Activated naive CD4-positive, alpha-beta T cell treated with anti-CD3 and anti-CD28 coated beads for 36 hours (primary cell): ENCODE measurements at regions of chr7 and their contacts with region 1.

Region 1: DNA sequence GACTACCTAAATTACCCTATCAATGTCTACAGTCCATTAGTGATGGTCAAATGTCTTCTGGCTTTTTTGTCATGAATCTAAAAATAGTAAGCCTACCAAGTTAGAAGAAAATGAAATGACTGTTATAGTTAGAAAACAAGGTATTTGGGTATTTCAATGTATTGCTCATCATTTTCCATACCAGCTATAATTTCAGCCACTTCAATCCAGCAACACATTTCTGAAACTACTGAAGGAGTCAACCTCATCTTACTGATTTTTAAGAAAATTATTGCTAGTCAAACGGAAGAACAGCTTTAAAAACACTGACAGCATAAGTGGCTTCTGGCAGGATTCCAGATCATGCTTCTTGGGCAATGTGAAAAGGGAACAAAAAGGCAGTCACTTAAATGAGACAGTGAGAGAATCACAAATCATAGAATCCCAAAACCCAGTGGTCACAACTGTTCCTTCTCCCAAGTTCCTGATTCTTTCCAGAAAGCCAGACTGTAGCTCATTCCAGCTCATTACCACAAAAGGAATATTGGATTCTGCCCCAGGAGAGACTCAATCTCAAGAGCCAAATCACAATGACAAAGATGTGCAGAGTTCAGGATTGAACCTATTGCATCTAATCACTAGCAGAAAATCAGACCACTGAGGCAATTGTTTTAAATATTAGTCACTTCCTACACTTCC is 61.2 kb upstream of the LRRN3 start:
- DNase-seq: peak; percentile 76
- H3K4me3 Mint-ChIP-seq: peak overlapping the region; percentile 34
- H3K27ac Mint-ChIP-seq: peak overlapping the region; percentile 89
- H3K4me1 Mint-ChIP-seq: peaks cover 54% of the 10 kb centered on the region
- H3K27me3 Mint-ChIP-seq: no peaks in the 10 kb centered on the region

Region 2: GRCh38 chr7:110317541-110318275 is 712.0 kb before region 1 on chr7:
- CTCF ChIA-PET with region 1: no interaction called
- intact Hi-C with region 1: no loop called
- DNase-seq: peak; percentile 4
- H3K4me3 Mint-ChIP-seq: no peak overlapping the region
- H3K27ac Mint-ChIP-seq: no peak overlapping the region
- H3K4me1 Mint-ChIP-seq: no peaks in the 10 kb centered on the region
- H3K27me3 Mint-ChIP-seq: peaks cover 2% of the 10 kb centered on the region

Region 3: DNA sequence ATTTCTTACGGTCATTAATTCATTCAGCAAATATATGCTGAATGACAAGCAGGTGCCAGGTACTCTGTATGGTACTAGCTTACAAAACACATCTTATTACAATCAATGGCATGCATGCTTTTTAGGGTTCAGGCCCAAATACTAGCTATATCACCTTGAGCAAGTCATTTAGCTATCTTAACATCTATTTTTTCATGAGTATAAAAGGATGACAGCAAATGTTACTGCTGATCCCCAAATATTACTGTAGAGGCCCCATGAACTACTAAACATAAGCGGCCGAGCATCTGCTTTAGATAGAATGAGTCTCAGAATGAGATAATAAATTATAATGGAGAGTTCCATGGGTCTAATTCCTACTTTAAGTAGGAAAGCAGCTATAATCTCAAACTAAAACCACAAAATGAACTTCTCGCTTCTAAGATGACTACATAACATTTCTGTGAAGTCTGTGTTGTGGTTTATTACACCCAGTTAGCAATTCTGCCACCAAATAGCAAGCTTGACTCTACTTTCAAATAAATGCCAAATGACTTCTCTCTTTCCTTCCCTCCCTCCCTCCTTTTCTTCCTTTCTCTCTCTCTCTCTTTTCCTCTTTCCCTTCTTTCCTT is 52.5 kb before region 1 on chr7:
- CTCF ChIA-PET with region 1: no interaction called
- intact Hi-C with region 1: loop called (anchors 1 kb)
- DNase-seq: no peak
- H3K4me3 Mint-ChIP-seq: no peak overlapping the region
- H3K27ac Mint-ChIP-seq: no peak overlapping the region
- H3K4me1 Mint-ChIP-seq: peaks cover 40% of the 10 kb centered on the region
- H3K27me3 Mint-ChIP-seq: peaks cover 3% of the 10 kb centered on the region

Region 4: GRCh38 chr7:111076205-111076604 is 46.5 kb after region 1 on chr7:
- CTCF ChIA-PET with region 1: no interaction called
- intact Hi-C with region 1: loop called (anchors 1 kb)
- DNase-seq: peak; percentile 63
- H3K4me3 Mint-ChIP-seq: no peak overlapping the region
- H3K27ac Mint-ChIP-seq: peak overlapping the region; percentile 20
- H3K4me1 Mint-ChIP-seq: peaks cover 65% of the 10 kb centered on the region
- H3K27me3 Mint-ChIP-seq: no peaks in the 10 kb centered on the region

Region 5: DNA sequence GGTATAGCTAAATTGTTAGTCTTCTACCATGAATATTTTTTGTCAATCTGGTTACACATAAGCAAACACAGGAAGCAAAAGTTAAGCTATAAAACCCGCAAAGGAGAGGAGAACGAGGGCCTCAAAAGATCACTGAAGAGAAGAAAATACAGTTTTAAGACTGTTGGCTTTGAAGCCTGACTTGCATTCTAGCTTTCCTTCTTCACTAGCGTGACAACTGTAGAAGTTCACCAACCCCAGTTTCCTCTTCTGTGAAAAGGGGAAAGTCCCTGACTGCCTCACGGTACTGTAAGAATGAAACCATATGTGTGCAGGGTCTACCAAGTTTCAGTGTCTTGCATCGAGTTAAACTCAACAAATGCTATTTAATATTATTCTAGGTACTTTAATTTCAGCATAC is 53.7 kb after region 1 on chr7:
- CTCF ChIA-PET with region 1: interaction called, 7 read pairs
- intact Hi-C with region 1: loop called (anchors 1 kb)
- DNase-seq: peak; percentile 70
- H3K4me3 Mint-ChIP-seq: no peak overlapping the region
- H3K27ac Mint-ChIP-seq: peak overlapping the region; percentile 76
- H3K4me1 Mint-ChIP-seq: peaks cover 72% of the 10 kb centered on the region
- H3K27me3 Mint-ChIP-seq: no peaks in the 10 kb centered on the region

Region 6: DNA sequence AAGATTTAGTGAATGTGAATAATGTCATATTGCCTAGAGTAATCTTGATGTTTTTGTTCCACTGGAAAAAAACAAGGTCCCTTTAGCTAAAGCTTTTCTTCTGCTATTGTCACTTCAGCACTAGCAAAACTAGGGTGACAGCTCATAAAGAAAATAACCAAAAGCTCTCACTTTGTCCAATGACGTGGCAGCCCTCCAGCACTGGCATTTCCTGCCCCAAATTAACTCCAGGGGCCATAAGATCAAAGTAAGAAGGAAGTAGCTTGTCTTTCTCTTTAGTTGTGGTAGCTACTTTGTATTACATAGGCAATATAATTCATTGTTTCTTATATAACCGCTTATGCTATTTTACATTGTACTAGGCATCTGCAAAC is 108.5 kb after region 1 on chr7:
- CTCF ChIA-PET with region 1: no interaction called
- intact Hi-C with region 1: loop called (anchors 1 kb)
- DNase-seq: peak; percentile 86
- H3K4me3 Mint-ChIP-seq: peak overlapping the region; percentile 62
- H3K27ac Mint-ChIP-seq: peak overlapping the region; percentile 92
- H3K4me1 Mint-ChIP-seq: peaks cover 32% of the 10 kb centered on the region
- H3K27me3 Mint-ChIP-seq: no peaks in the 10 kb centered on the region

Region 7: DNA sequence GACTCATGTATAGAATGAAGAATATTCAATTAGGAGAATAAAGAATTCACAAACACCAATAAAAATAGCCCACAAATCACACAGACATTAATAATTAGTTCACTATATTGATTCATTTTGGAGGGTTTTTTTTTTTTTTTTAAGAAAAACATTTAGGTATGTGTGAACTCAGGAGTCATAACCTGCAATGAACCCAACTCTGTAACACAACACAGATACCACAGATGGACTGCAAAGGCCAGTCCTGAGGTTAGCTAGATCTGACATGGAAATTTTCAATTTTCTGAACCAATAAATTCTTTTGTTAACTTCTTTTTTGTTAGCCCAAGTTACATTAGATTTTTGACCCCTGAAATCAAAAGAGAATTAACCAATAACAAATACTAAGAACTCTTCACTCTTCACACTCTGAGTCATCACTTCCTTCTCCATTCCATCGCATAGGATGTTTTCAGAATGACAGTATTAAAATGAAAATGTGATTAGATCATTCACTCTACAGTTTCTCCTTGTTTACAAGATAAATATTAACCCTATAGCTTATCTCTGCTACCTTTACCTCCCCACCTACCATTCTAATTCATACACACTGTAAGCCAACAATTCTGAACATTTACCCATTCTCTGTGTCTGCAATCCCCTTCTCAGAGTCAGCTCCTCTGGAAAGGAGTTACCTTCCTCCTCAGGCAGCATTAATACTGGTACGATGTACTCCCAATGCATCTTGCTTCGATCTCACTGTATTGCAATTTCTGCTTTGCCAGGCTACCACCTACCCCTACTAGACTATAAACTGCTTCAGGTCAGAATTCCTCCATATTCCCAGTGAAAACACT is 202.8 kb after region 1 on chr7:
- CTCF ChIA-PET with region 1: no interaction called
- intact Hi-C with region 1: loop called (anchors 5 kb)
- DNase-seq: no peak
- H3K4me3 Mint-ChIP-seq: no peak overlapping the region
- H3K27ac Mint-ChIP-seq: no peak overlapping the region
- H3K4me1 Mint-ChIP-seq: peaks cover 12% of the 10 kb centered on the region
- H3K27me3 Mint-ChIP-seq: no peaks in the 10 kb centered on the region